SK-N-SH (cell line): ENCODE measurements at regions of chr7 and their contacts with region 1.

Region 1: GRCh38 chr7:111676811-111677210 is 114.5 kb upstream of the IMMP2L start:
- DNase-seq: no peak
- H3K4me3 ChIP-seq: no peak overlapping the region
- H3K27ac ChIP-seq: no peak overlapping the region
- H3K4me1 ChIP-seq: peaks cover 0 to 13% of the 10 kb centered on the region in 2 experiments
- H3K27me3 ChIP-seq: no peaks in the 10 kb centered on the region
- CTCF ChIP-seq: no peak
- EP300 ChIP-seq: no peak
- RAD21 ChIP-seq: no peak

Region 2: DNA sequence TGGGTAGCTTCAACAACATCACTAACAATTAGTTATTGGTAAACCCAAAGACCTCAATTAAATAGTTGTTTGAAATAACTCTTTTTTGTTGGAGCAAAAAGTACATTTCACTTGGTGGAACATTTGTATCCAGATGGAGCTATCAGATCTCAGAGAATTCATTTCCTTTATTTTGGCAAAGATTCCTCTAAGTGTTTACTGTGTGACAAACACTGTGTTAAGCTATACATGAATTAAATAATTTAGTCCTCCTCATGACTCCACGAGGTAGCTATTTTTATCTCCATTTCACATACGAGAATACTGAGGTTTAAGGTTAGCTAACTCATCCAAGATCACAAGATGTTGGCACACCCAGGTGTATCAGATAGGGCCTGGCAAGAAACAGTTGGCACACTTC is 10.6 kb before region 1 on chr7:
- CTCF ChIA-PET with region 1: interaction called, 17 read pairs
- POLR2A ChIA-PET with region 1: no interaction called
- DNase-seq: no peak
- H3K4me3 ChIP-seq: no peak overlapping the region
- H3K27ac ChIP-seq: no peak overlapping the region
- H3K4me1 ChIP-seq: no peaks in the 10 kb centered on the region
- H3K27me3 ChIP-seq: no peaks in the 10 kb centered on the region
- CTCF ChIP-seq: no peak
- EP300 ChIP-seq: no peak
- RAD21 ChIP-seq: no peak

Region 3: GRCh38 chr7:111827863-111828504 is 151.2 kb after region 1 on chr7:
- CTCF ChIA-PET with region 1: no interaction called
- POLR2A ChIA-PET with region 1: no interaction called
- DNase-seq: no peak
- H3K4me3 ChIP-seq: no peak overlapping the region
- H3K27ac ChIP-seq: peak overlapping the region in 1 of 2 experiments; percentile 2; a peak in 1 of 4 replicates
- H3K4me1 ChIP-seq: peaks cover 3 to 10% of the 10 kb centered on the region in 2 experiments; a peak in 2 of 4 replicates
- H3K27me3 ChIP-seq: no peaks in the 10 kb centered on the region
- CTCF ChIP-seq: no peak
- EP300 ChIP-seq: no peak
- RAD21 ChIP-seq: no peak

Region 4: DNA sequence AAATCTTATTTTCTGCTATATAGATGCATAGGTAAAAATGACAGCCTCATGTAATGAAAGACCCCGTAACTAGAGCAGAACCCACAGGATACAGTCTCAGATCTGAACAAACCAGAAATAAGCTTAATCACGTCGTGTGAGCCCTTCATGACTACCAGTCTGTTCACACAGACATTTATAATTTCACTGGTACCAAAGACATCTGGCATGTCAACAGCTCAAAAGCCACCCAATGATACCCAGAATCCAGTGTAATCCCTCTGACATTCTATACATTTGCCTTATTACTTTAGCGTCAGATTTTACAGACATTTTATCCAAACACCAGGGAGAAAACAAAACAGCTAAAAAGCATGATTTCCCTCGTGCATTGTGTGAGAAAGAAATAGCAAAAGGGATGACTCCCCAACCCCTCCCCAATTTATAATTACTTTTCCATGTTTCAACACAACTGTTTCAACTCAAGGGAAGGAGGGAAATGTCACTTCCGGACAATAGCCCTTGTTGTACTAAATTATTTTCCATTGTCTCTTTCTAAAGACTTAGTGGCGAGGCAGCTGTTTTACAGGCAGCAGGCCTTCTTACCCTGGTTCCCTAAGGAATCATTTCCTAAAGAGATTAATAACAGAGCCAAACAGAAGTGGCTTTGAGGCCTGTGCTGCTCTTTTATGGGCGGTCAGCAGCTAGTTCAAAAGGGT is 496.2 kb after region 1 on chr7:
- CTCF ChIA-PET with region 1: no interaction called
- POLR2A ChIA-PET with region 1: no interaction called
- DNase-seq: no peak
- H3K4me3 ChIP-seq: no peak overlapping the region
- H3K27ac ChIP-seq: peak overlapping the region in 1 of 2 experiments; percentile 41; a peak in 2 of 4 replicates
- H3K4me1 ChIP-seq: peaks cover 0 to 10% of the 10 kb centered on the region in 2 experiments; a peak in 2 of 4 replicates
- H3K27me3 ChIP-seq: no peaks in the 10 kb centered on the region
- CTCF ChIP-seq: no peak
- EP300 ChIP-seq: no peak
- RAD21 ChIP-seq: no peak